ENCODE measurements at regions of chr22 and their contacts with region 1.

Region 1: DNA sequence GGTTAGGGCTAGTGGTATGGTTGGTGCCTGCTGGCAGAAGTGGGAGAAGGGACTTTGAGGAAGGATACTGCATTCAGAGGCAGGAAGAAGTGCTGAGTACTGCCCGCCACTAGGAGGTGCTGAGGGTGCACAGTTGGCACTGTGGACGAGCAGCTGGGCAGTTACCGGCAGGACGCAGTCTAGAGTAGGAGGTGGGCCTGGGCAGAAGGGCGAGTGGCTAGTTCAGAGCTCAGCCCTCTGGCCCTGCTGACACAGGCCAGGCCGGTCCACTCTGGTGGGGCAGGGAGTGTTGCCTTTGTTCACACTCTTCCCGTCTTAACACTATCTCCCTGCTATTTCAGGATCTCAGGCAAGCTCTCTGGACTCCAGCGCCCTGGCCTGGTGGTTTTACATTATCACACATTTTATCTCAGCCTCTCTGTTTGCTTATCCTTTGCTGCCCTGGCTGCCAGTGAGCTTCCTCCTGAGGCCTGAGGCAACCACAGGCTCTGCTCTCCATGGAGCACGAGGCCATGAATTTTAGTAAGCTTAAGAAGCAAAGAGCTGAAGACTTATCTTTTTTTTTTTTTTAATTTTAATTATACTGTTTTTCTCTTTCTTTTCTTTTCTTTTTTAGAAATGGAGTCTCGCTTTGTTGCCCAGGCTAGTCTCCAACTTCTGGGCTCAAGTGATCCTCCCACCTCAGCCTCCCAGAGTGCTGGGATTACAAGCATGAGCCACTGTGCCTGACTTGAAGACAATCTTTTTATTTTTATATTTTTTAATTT is 26.9 kb downstream of the SNAP29 start:
- DNase-seq: peak; percentile 61 to 96 (median 80)

Region 2: GRCh38 chr22:20946080-20946986 is 60.6 kb after region 1 on chr22:
- intact Hi-C with region 1: loop called (anchors 10 kb)
- DNase-seq: peak in 2 of 10 donors; percentile 18 to 25

Region 3: GRCh38 chr22:20981787-20982562 is 96.2 kb after region 1 on chr22 and contains the start of gene LZTR1:
- intact Hi-C with region 1: loop called (anchors 10 kb)
- DNase-seq: peak; percentile 81 to 98 (median 86)

Measured in posterior cingulate gyrus (tissue), 11 donors.